ENCODE measurements at regions of chr1 and their contacts with region 1.

Region 1: GRCh38 chr1:81021134-81021533 is 779.6 kb upstream of the ADGRL2 start:
- DNase-seq: no peak
- ATAC-seq: no peak
- H3K4me3 ChIP-seq: no peak overlapping the region
- H3K4me3 Mint-ChIP-seq: no peak overlapping the region
- H3K27ac ChIP-seq: no peak overlapping the region
- H3K27ac Mint-ChIP-seq: no peak overlapping the region
- H3K4me1 ChIP-seq: no peaks in the 10 kb centered on the region
- H3K4me1 Mint-ChIP-seq: no peaks in the 10 kb centered on the region
- H3K27me3 ChIP-seq: no peaks in the 10 kb centered on the region
- H3K27me3 Mint-ChIP-seq: no peaks in the 10 kb centered on the region

Region 2: DNA sequence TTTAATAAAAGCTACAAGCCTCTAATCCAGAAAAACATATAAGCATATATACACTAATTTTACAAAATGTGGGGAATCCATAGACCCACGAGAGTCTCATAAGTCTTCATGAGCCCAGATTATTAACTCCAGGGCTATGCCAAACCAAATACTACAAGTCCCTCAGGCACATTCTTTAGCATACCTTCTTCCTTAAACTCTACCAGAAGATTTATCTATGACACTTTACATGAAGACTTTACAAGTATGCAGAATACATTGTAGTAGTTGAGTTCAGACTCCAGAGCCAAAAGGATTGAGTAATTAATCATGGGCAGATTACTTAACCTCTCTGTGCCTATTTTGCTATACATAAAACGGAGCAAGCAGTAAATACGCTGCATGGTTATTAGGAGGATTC is 14.1 kb before region 1 on chr1:
- CTCF ChIA-PET with region 1: no interaction called
- POLR2A ChIA-PET with region 1: no interaction called
- DNase-seq: no peak
- ATAC-seq: no peak
- H3K4me3 ChIP-seq: no peak overlapping the region
- H3K4me3 Mint-ChIP-seq: no peak overlapping the region
- H3K27ac ChIP-seq: no peak overlapping the region
- H3K27ac Mint-ChIP-seq: no peak overlapping the region
- H3K4me1 ChIP-seq: no peaks in the 10 kb centered on the region
- H3K4me1 Mint-ChIP-seq: no peaks in the 10 kb centered on the region
- H3K27me3 ChIP-seq: no peaks in the 10 kb centered on the region
- H3K27me3 Mint-ChIP-seq: no peaks in the 10 kb centered on the region

Region 3: DNA sequence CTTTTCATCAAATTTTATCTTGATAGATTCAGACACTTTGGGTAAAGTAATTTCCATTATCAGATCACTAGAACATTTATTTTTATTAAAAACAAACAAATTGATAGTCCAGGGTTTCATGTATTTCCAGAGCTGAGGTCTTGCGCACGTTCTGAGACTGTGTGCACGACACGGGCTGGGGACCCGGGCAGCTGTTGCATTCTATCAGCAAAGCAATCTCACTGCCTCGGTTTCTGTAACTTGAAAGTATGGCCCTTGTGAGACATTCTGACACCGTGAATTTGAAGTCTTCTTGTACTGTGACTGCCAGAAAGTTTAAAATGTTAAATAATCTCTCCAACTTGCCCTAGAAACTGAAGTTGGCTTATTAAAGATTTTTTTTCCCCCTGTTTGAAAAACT is 32.7 kb after region 1 on chr1:
- CTCF ChIA-PET with region 1: no interaction called
- POLR2A ChIA-PET with region 1: interaction called in 1 of 2 experiments, 12 read pairs
- DNase-seq: no peak
- ATAC-seq: no peak
- H3K4me3 ChIP-seq: no peak overlapping the region
- H3K4me3 Mint-ChIP-seq: no peak overlapping the region
- H3K27ac ChIP-seq: no peak overlapping the region
- H3K27ac Mint-ChIP-seq: no peak overlapping the region
- H3K4me1 ChIP-seq: no peaks in the 10 kb centered on the region
- H3K4me1 Mint-ChIP-seq: no peaks in the 10 kb centered on the region
- H3K27me3 ChIP-seq: no peaks in the 10 kb centered on the region
- H3K27me3 Mint-ChIP-seq: no peaks in the 10 kb centered on the region